Head of caudate nucleus (tissue), 42 donors: ENCODE measurements at regions of chr7 and their contacts with region 1.

Region 1: GRCh38 chr7:99504603-99505323 is at the start of gene ZKSCAN5:
- DNase-seq: peak; percentile 96 to 100 (median 99)

Region 2: GRCh38 chr7:99558306-99559174 is 53.8 kb after region 1 on chr7 and contains the start of gene ZNF655:
- intact Hi-C with region 1: loop called (anchors 5 kb)
- DNase-seq: peak; percentile 73 to 97 (median 89)

Region 3: GRCh38 chr7:99762680-99763327 is 258.0 kb after region 1 on chr7:
- intact Hi-C with region 1: no loop called
- DNase-seq: no peak